WTC11 (cell line): ENCODE measurements at regions of chr4 and their contacts with region 1.

Region 1: DNA sequence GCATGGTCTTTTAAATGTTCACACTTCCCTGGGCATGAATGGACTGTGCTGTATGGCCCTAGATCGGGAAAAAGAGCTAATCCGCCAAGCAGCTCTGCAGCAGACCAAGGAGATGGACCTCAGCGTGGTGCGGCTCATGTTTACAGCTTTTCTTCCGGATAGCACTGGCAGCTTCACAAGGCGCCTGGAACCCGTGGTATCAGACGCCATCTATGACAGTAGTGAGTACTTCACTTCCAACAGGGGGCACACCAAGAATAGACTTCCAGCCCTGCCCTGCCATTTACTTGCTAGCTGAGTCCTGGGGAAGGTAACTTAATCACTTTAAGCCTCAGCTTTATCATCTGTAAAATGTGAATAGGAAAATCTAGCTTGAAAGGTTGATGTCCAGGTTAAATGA is 77.7 kb downstream of the NFKB1 start:
- DNase-seq: peak; percentile 72
- ATAC-seq: peak; percentile 99
- H3K4me3 Mint-ChIP-seq: peak overlapping the region; percentile 39
- H3K27ac Mint-ChIP-seq: no peak overlapping the region
- H3K4me1 Mint-ChIP-seq: peaks cover 17% of the 10 kb centered on the region
- H3K27me3 Mint-ChIP-seq: no peaks in the 10 kb centered on the region
- CTCF ChIP-seq: no peak

Region 2: DNA sequence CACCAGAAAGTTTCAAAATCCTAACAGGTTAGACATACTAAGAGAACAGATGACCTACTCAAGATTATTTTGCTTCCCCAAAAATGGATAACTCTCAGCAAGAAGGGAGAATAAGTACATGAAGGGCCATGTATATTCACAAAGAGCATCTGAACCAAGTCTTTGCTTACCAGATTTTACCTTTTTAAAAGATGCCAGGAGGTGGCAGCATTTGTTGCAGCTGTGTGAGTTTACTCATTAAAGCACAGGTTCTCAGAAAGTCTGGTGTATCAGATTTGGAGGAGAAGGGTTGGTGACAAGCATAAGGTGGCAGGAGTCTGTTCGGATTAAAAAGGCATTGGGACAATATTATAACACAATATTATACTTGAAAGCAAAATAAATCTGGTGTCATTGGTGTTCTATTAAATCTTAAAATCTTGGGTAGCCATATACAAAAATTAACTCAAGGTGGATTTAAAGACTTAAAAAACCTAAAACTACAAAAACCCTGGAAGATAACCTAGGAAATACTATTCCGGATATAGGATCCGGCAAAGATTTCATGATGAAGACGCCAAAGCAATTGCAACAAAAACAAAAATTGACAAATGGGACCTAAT is 129.0 kb before region 1 on chr4:
- CTCF ChIA-PET with region 1: interaction called, 24 read pairs
- POLR2A ChIA-PET with region 1: no interaction called
- DNase-seq: peak; percentile 18
- ATAC-seq: peak; percentile 80
- H3K4me3 Mint-ChIP-seq: no peak overlapping the region
- H3K27ac Mint-ChIP-seq: no peak overlapping the region
- H3K4me1 Mint-ChIP-seq: peaks cover 22% of the 10 kb centered on the region
- H3K27me3 Mint-ChIP-seq: no peaks in the 10 kb centered on the region
- CTCF ChIP-seq: no peak

Region 3: GRCh38 chr4:102466298-102466697 is 112.5 kb before region 1 on chr4:
- CTCF ChIA-PET with region 1: no interaction called
- POLR2A ChIA-PET with region 1: no interaction called
- DNase-seq: no peak
- ATAC-seq: no peak
- H3K4me3 Mint-ChIP-seq: no peak overlapping the region
- H3K27ac Mint-ChIP-seq: no peak overlapping the region
- H3K4me1 Mint-ChIP-seq: no peaks in the 10 kb centered on the region
- H3K27me3 Mint-ChIP-seq: no peaks in the 10 kb centered on the region; the same call in 1 of the 2 replicates
- CTCF ChIP-seq: no peak

Region 4: DNA sequence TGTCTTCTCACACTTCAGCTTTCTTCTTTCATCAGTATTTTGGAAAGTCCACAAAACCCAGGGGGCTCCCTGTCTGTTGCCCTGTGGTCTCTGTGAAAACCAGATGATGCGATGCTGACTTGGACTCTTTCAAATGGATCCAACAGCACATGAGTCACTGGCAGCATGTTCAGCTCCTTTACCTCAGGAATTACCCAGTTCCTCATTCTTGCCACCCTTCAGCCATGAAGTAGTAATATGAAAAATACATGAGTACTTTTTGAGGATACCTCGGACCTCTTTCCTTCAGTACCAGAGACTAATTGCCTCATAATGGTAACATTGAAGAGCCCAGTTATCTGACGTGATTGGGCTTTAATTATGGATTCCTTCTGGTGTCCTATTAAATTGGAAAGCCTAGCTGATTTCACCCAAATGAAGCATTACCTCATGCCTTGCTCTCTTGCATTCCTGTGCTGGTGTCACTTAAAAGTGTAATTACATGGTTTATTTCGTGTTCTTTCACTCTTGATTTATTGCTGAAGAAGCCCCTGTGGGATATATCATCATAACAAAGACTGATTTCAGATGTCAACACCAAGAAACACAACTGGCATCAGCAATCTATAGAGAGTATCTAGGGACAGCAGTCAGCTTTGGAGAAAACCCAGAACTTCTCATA is 14.3 kb before region 1 on chr4:
- CTCF ChIA-PET with region 1: interaction called, 12 read pairs
- POLR2A ChIA-PET with region 1: no interaction called
- DNase-seq: no peak
- ATAC-seq: no peak
- H3K4me3 Mint-ChIP-seq: no peak overlapping the region
- H3K27ac Mint-ChIP-seq: no peak overlapping the region
- H3K4me1 Mint-ChIP-seq: no peaks in the 10 kb centered on the region
- H3K27me3 Mint-ChIP-seq: no peaks in the 10 kb centered on the region
- CTCF ChIP-seq: no peak

Region 5: DNA sequence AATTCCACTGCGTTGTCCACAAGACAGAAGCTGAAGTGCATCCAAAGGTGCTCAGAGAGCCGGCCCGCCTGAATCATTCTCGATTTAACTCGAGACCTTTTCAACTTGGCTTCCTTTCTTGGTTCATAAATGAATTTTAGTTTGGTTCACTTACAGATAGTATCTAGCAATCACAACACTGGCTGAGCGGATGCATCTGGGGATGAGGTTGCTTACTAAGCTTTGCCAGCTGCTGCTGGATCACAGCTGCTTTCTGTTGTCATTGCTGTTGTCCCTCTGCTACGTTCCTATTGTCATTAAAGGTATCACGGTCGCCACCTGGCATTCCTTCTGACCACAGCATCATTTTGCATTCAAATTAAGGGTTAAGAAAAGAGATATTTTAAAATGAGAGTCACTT is 37.8 kb after region 1 on chr4:
- CTCF ChIA-PET with region 1: interaction called, 19 read pairs
- POLR2A ChIA-PET with region 1: no interaction called
- DNase-seq: peak; percentile 25
- ATAC-seq: peak; percentile 36
- H3K4me3 Mint-ChIP-seq: no peak overlapping the region
- H3K27ac Mint-ChIP-seq: peak overlapping the region; percentile 47
- H3K4me1 Mint-ChIP-seq: peaks cover 52% of the 10 kb centered on the region
- H3K27me3 Mint-ChIP-seq: no peaks in the 10 kb centered on the region
- CTCF ChIP-seq: no peak

Region 6: DNA sequence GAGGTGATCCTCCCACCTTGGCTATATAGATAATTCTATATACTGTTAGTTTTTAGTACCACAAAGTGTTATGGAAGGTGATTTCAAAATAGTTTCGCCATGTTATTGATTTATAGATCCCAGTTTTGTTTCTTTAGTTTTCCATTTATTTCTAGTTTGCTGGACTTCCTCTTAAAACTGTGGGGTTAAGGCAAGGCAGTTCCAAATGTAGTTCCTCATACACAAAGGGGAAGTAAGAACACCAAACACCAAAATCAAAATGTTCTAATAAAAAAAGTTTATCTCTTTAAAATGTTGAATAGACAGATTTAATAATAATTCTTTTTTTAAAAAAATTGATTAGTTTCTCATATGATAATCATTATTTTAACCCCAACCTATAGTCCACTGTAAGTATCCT is 283.2 kb after region 1 on chr4:
- CTCF ChIA-PET with region 1: no interaction called
- POLR2A ChIA-PET with region 1: no interaction called
- DNase-seq: no peak
- ATAC-seq: no peak
- H3K4me3 Mint-ChIP-seq: no peak overlapping the region
- H3K27ac Mint-ChIP-seq: no peak overlapping the region
- H3K4me1 Mint-ChIP-seq: peaks cover 14% of the 10 kb centered on the region
- H3K27me3 Mint-ChIP-seq: no peaks in the 10 kb centered on the region
- CTCF ChIP-seq: no peak

Region 7: GRCh38 chr4:103008875-103009729 is 430.3 kb after region 1 on chr4:
- CTCF ChIA-PET with region 1: interaction called, 12 read pairs
- POLR2A ChIA-PET with region 1: no interaction called
- DNase-seq: no peak
- ATAC-seq: peak; percentile 92
- H3K4me3 Mint-ChIP-seq: no peak overlapping the region
- H3K27ac Mint-ChIP-seq: no peak overlapping the region
- H3K4me1 Mint-ChIP-seq: no peaks in the 10 kb centered on the region
- H3K27me3 Mint-ChIP-seq: no peaks in the 10 kb centered on the region; the same call in 1 of the 2 replicates
- CTCF ChIP-seq: peak; percentile 32